Adrenal gland (tissue), 19 donors: ENCODE measurements at regions of chr1 and their contacts with region 1.

Region 1: DNA sequence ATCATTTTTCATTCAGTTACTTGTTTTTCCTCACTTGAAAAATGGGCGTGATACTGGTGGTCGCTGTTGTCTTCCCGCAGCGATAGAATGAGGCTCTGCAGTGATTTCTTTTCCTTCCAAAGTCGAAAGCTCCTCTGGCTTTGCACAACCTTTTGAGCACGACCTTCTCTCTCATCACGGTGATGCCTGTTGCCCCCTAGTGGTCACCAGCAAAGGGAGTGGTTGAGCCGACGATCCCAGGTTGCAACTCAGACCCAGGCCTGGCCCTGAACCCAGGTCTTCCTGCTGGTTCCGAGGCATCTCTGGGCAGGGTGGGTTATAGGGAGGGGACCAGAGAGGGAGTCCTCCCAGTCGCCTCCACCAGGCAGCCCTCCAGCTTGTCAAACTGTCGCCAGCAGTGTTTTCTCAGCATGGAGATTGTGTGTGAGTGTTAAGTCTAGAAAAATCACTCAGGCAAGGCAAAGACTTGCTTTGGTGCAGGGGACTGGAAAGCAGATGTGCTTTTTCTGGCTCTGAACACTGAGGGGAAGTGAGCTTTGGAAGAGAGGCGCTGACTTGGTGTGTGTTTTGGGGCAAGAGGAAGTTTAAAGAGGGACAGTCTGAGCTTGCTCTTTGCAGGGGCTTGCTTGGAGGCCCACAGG is 285.3 kb downstream of the CAMTA1 start:
- DNase-seq: peak; percentile 64 to 86 (median 73)
- H3K4me3 ChIP-seq: peak overlapping the region in 2 of 4 donors; percentile 16
- H3K27ac ChIP-seq: peak overlapping the region in 1 of 5 donors; percentile 52
- H3K4me1 ChIP-seq: peaks cover 0 to 5% of the 10 kb centered on the region in 2 donors
- H3K27me3 ChIP-seq: no peaks in the 10 kb centered on the region
- CTCF ChIP-seq: peak; percentile 72 to 81 (median 78)
- POLR2A ChIP-seq: no peak

Region 2: GRCh38 chr1:6784560-6785317 is 285.8 kb before region 1 on chr1:
- intact Hi-C with region 1: loop called in 1 of 2 experiments (anchors 10 kb)
- DNase-seq: peak; percentile 99 to 100 (median 100)
- H3K4me3 ChIP-seq: peak overlapping the region in 2 of 4 donors; percentile 80 to 86
- H3K27ac ChIP-seq: peak overlapping the region; percentile 80 to 99 (median 98)
- H3K4me1 ChIP-seq: peaks cover 4 to 31% of the 10 kb centered on the region in 2 donors
- H3K27me3 ChIP-seq: no peaks in the 10 kb centered on the region
- CTCF ChIP-seq: peak in 1 of 6 experiments; percentile 30
- POLR2A ChIP-seq: peak; percentile 82 to 97

Region 3: GRCh38 chr1:6794164-6794563 is 276.3 kb before region 1 on chr1:
- intact Hi-C with region 1: loop called (anchors 5 to 10 kb)
- DNase-seq: no peak
- H3K4me3 ChIP-seq: no peak overlapping the region
- H3K27ac ChIP-seq: no peak overlapping the region
- H3K4me1 ChIP-seq: peaks cover 0 to 37% of the 10 kb centered on the region in 2 donors
- H3K27me3 ChIP-seq: no peaks in the 10 kb centered on the region
- CTCF ChIP-seq: peak; percentile 15 to 69 (median 56)
- POLR2A ChIP-seq: no peak

Region 4: DNA sequence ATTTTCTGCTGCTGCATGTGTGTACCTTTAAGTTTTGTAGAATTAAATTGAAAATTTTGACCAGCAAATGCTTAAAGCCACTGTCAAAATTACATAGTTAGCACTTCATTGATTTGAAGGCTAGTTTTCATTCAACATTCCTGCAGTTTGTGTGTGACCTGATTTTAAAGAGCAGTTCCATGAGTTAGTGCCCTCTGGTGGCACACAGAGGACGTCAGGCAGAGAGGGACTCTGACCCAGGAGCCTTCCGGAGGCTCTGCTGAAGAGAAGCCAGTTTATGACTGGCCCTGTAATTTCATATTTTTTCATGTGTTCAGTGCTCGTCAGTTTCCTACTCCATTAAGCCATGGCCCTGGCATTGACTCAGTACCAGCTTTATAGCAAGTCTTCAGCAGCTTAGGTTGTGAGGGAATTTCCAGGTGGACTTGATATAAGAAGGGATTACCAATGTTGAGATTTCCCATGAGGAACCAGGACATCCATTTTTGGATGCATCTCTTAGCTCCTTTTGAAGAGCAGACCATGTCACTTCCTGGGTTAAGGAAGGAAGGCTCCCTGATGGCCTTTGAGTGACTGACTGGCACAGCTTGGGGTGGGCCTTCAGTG is 180.5 kb before region 1 on chr1:
- intact Hi-C with region 1: loop called in 1 of 2 experiments (anchors 5 kb)
- DNase-seq: peak; percentile 69 to 88 (median 76)
- H3K4me3 ChIP-seq: no peak overlapping the region
- H3K27ac ChIP-seq: no peak overlapping the region
- H3K4me1 ChIP-seq: peaks cover 1 to 11% of the 10 kb centered on the region in 2 donors
- H3K27me3 ChIP-seq: no peaks in the 10 kb centered on the region
- CTCF ChIP-seq: peak; percentile 69 to 91 (median 81)
- POLR2A ChIP-seq: no peak

Region 5: GRCh38 chr1:6935361-6935883 is 135.1 kb before region 1 on chr1:
- intact Hi-C with region 1: no loop called
- DNase-seq: no peak
- H3K4me3 ChIP-seq: no peak overlapping the region
- H3K27ac ChIP-seq: no peak overlapping the region
- H3K4me1 ChIP-seq: no peaks in the 10 kb centered on the region
- H3K27me3 ChIP-seq: no peaks in the 10 kb centered on the region
- CTCF ChIP-seq: no peak
- POLR2A ChIP-seq: no peak

Region 6: DNA sequence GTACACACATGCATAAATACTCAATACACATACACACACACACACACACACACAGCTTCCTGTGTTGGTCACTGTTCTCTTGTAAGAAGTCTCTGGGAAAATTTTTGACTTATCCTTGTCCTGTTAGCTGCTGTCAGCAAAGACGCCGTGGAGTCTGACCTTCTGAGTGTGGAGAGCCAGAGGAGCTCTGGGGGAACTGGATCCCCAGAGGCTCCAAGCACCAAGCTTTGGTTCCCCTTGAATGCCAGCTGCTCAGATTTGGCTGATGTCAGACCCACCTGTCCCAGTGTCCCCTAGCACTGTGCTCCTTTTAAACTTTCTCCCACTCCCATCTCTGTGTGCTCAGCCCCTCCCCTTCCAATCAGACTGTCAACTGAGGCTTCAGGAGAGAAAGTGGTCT is 33.8 kb after region 1 on chr1:
- intact Hi-C with region 1: no loop called
- DNase-seq: no peak
- H3K4me3 ChIP-seq: no peak overlapping the region
- H3K27ac ChIP-seq: no peak overlapping the region
- H3K4me1 ChIP-seq: no peaks in the 10 kb centered on the region
- H3K27me3 ChIP-seq: no peaks in the 10 kb centered on the region
- CTCF ChIP-seq: no peak
- POLR2A ChIP-seq: no peak

Region 7: GRCh38 chr1:7356079-7356478 is 285.6 kb after region 1 on chr1:
- intact Hi-C with region 1: no loop called
- DNase-seq: no peak
- H3K4me3 ChIP-seq: no peak overlapping the region
- H3K27ac ChIP-seq: no peak overlapping the region
- H3K4me1 ChIP-seq: no peaks in the 10 kb centered on the region
- H3K27me3 ChIP-seq: no peaks in the 10 kb centered on the region
- CTCF ChIP-seq: no peak
- POLR2A ChIP-seq: no peak